ENCODE measurements at regions of chr11 and their contacts with region 1.

Region 1: DNA sequence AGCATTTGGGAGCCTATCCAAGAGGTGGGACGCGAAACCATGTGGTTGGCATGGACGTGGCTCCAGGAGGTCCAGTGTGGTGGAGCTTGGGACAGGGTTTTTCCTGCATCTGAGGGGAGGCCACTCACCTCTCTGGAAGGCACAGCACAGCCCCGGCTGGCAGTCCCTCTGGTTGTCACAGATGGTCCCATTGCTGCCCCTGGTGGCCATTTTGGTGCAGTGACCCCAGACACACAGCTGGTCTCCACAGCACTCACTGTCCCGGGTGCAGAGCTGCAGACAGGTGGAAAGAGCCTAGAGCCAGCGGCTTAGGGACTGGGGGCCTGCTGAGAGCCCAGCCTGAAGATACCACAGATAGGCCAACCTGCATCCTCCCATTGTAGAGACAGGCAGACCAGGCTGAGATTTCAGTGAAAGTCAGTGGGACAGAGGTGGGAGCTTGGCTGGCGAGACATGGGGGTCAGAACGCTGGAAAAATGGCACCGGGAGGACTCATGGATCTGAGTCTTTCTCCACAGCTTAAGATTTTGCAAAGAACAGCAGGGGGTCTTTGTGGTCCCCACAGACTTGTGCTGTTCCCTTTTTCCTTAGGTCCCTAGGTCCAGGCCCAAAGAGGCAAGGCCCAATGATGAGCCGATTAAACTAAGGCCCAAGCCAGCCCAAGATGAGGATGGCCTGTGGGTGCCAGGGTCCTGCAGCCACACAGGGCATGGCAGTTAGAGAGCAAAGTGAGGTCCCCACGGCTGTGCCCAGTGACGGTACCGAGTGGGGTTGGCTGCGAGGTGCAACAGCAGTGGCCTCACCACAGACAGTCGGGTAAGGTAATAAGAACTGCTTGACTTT is 41.4 kb downstream of the DKK3 start:
- DNase-seq: peak; percentile 90
- ATAC-seq: peak; percentile 98
- H3K4me3 Mint-ChIP-seq: no peak overlapping the region
- H3K27ac Mint-ChIP-seq: no peak overlapping the region
- H3K4me1 Mint-ChIP-seq: peaks cover 8% of the 10 kb centered on the region; the same call in 1 of the 2 replicates
- H3K27me3 Mint-ChIP-seq: no peaks in the 10 kb centered on the region; the same call in 1 of the 2 replicates
- CTCF ChIP-seq: peak; percentile 77

Region 2: DNA sequence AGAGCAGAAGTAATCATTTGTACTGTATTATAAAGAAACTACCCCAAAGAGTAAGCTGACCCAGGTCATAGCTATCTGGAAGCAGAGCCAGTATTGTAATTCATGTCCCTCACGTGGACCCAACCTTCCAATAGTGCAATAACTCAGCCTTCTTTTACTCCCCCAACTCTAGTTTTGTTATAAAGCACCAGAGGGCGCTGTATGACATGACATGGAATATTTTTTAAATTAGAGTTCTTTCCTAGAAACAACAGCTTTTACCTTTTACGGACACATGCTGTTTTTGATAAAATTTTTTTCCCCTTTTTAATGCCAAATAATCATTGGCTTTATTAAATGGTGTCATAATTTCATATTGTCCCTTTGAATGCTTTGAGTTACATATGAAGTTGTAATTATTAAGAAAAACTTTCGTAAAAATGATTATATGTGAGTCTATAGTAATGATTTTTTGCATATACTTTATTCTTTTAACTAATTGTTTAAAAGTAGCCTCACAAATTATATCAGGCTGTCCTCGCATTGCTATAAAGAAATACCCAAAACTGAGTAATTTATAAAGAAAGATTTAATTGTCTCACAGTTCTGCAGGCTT is 35.5 kb before region 1 on chr11:
- CTCF ChIA-PET with region 1: interaction called, 14 read pairs
- POLR2A ChIA-PET with region 1: no interaction called
- DNase-seq: no peak
- ATAC-seq: peak; percentile 80
- H3K4me3 Mint-ChIP-seq: no peak overlapping the region
- H3K27ac Mint-ChIP-seq: no peak overlapping the region
- H3K4me1 Mint-ChIP-seq: 0 out of 2 replicates have a peak, but pooled peaks cover 2% of the 10 kb centered on the region
- H3K27me3 Mint-ChIP-seq: no peaks in the 10 kb centered on the region
- CTCF ChIP-seq: peak; percentile 31

Region 3: DNA sequence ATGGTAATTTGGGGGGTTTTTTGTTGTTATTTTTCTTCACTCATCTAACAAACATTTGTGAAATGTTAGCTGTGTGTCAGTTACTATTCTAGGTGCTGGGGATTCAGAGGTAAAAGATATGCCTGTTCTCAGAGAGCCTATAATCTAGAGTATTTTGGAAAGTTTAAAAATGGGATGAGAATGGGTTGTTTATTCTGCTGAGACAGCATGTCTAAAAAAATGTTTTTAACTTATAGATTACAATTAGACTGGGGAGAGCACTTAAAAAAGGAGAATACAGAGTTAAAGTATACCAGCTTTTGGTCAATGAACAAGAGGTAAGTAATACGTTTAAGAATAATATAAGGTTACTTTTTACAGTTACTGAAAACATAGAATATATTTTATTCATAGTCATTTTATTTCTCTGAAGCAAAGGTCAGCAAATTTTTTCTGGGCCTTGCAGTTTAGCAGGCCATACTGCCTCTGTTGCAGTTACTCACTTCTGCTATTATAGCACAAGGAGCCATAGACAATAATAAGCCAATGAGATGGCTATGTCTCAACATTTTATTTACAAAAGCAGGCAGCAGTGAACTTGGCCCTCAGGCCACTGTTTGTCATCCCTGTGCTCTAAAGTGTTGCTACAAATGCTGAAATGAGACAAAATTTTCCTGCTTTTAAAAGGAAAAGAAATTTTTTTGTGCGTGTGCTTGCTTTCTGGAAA is 18.7 kb before region 1 on chr11:
- CTCF ChIA-PET with region 1: interaction called, 13 read pairs
- POLR2A ChIA-PET with region 1: no interaction called
- DNase-seq: no peak
- ATAC-seq: no peak
- H3K4me3 Mint-ChIP-seq: no peak overlapping the region
- H3K27ac Mint-ChIP-seq: no peak overlapping the region
- H3K4me1 Mint-ChIP-seq: no peaks in the 10 kb centered on the region
- H3K27me3 Mint-ChIP-seq: no peaks in the 10 kb centered on the region
- CTCF ChIP-seq: no peak

Region 4: GRCh38 chr11:11977206-11977938 is 10.3 kb after region 1 on chr11:
- CTCF ChIA-PET with region 1: interaction called, 38 read pairs
- POLR2A ChIA-PET with region 1: no interaction called
- DNase-seq: no peak
- ATAC-seq: peak; percentile 46
- H3K4me3 Mint-ChIP-seq: no peak overlapping the region
- H3K27ac Mint-ChIP-seq: peak overlapping the region; percentile 52; the same call in 1 of the 2 replicates
- H3K4me1 Mint-ChIP-seq: peaks cover 22% of the 10 kb centered on the region
- H3K27me3 Mint-ChIP-seq: no peaks in the 10 kb centered on the region; the same call in 1 of the 2 replicates
- CTCF ChIP-seq: no peak

Region 5: GRCh38 chr11:11982975-11983374 is 15.9 kb after region 1 on chr11:
- CTCF ChIA-PET with region 1: interaction called, 11 read pairs
- POLR2A ChIA-PET with region 1: no interaction called
- DNase-seq: no peak
- ATAC-seq: no peak
- H3K4me3 Mint-ChIP-seq: no peak overlapping the region
- H3K27ac Mint-ChIP-seq: no peak overlapping the region
- H3K4me1 Mint-ChIP-seq: peaks cover 22% of the 10 kb centered on the region
- H3K27me3 Mint-ChIP-seq: no peaks in the 10 kb centered on the region; the same call in 1 of the 2 replicates
- CTCF ChIP-seq: no peak

Region 6: DNA sequence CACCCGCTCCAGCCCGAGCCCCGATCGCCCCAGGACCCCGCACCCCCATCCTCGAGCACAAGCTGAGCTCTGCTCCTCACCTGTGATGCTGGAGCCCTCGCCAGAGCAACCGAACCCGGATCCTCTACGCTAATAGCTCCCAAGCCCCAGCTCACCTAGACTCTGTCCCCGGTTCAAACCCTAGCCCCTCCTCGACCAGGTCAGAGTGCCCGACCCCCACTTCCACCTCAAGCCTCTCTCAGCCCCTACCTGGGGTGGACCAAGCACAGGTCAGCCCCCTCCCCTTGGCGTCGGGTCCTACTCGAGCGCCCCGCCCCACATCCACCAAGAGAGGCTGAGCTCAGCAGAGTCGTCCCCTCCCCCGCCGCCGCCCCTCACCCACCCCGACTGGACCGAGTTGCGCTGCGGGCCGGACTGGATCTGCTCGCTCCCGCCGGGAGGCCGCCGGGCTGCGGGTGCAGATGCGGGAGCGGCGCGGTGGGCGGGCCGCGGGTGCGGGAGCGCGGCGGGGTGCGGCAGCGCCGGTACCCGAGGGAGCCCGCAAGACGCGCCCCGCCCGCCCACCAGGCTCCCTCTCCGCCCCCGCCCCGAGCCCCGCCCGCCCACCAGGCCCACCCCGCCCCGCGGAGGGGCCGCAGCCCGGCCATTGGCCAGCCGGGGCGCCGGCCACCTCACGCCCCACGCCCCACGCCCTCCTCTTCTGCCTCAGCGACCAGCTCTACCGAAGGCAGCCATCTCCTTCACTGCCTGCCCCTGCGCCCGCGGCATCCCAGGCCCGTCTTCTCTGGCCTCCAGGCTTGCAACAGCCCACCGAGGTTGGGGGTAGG is 42.0 kb after region 1 on chr11:
- CTCF ChIA-PET with region 1: interaction called, 36 read pairs
- POLR2A ChIA-PET with region 1: interaction called, 3 read pairs
- DNase-seq: peak; percentile 81
- ATAC-seq: peak; percentile 83
- H3K4me3 Mint-ChIP-seq: peak overlapping the region; percentile 92
- H3K27ac Mint-ChIP-seq: peak overlapping the region; percentile 71
- H3K4me1 Mint-ChIP-seq: peaks cover 28% of the 10 kb centered on the region
- H3K27me3 Mint-ChIP-seq: peaks cover 37% of the 10 kb centered on the region
- CTCF ChIP-seq: no peak